AG04449 (cell line): ENCODE measurements at regions of chr1 and their contacts with region 1.

Region 1: GRCh38 chr1:186155594-186155993 is 219.5 kb downstream of the TPR start:
- DNase-seq: peak; percentile 49
- H3K4me3 ChIP-seq: no peak overlapping the region
- CTCF ChIP-seq: peak; percentile 66

Region 2: GRCh38 chr1:186175588-186175987 is 20.0 kb after region 1 on chr1:
- CTCF ChIA-PET with region 1: interaction called, 16 read pairs
- POLR2A ChIA-PET with region 1: no interaction called
- DNase-seq: no peak
- H3K4me3 ChIP-seq: no peak overlapping the region
- CTCF ChIP-seq: no peak

Region 3: DNA sequence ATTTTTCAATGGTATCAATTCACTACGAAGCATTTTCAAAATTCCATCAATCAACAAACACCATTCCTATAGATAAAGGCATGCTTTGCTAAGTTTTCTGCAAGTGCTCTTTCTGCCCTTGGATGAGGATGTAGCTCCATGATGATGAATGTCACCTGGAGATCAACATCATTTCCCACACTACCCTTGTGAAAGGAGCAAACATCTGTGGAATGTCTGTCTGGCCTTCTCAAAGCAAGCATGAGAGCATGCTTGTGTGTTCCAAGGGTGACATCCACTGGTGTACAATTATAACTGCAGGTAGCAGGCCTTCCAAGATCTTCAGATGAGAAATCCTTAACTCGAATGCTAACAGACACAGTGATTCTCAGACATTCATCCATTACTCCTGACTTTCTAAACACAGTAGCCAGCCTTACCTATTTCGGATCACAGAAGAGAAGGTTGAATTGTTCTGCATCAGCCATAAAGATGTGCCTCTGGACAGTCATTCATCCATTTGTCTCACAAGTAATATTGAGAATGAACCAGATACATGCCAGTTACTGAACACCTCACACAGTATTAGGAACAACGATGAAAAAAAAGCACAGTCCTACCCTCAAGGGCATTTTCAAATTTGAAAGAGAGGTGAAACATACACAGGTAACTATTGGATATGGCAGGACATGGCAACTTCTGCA is 57.1 kb after region 1 on chr1:
- CTCF ChIA-PET with region 1: interaction called, 33 read pairs
- POLR2A ChIA-PET with region 1: interaction called, 3 read pairs
- DNase-seq: peak; percentile 92
- H3K4me3 ChIP-seq: no peak overlapping the region
- CTCF ChIP-seq: peak; percentile 77

Region 4: DNA sequence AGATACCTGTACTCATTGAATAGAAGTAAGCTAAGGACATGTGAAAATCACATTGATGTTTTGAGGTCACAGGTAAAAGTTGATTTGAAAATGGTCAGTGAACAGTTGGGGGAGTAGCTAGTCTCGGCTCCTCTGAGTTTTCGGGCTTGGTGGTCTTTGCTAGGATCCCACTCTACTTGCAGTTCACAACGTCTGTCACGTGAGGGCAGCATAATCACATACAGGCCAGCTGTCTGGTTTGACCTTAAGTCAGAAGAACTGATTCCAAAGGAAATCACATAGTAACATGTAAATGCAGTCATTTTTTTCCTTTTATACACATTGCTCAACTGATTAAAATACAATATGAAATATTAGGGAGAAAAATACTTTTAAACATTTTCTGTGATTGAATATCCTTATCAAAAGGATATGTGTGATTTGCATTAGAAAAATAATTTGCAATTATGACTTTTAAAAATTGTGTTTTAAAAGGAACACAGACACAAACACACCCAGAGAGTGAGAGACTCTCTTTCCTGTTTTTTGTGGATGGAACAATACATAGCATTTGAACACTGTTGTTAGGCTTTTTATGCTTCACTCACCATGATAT is 327.2 kb after region 1 on chr1:
- CTCF ChIA-PET with region 1: no interaction called
- POLR2A ChIA-PET with region 1: no interaction called
- DNase-seq: no peak
- H3K4me3 ChIP-seq: no peak overlapping the region
- CTCF ChIP-seq: peak; percentile 87